Panc1 (cell line): ENCODE measurements at regions of chr3 and their contacts with region 1.

Region 1: GRCh38 chr3:57692259-57693147 is at the start of gene DENND6A:
- DNase-seq: no peak
- ATAC-seq: peak; percentile 97
- H3K4me3 ChIP-seq: peak within 1 kb of the TSS; percentile 76 to 91
- H3K27ac ChIP-seq: peak within 1 kb of the TSS; percentile 87
- H3K4me1 ChIP-seq: no peaks in the 10 kb centered on the region; the same call in 1 of the 2 replicates
- H3K27me3 ChIP-seq: no peaks in the 10 kb centered on the region
- CTCF ChIP-seq: no peak
- total RNA-seq, gene DENND6A: 18.1 TPM

Region 2: GRCh38 chr3:57755668-57756527 is 63.4 kb after region 1 on chr3 and contains the start of gene SLMAP:
- CTCF ChIA-PET with region 1: no interaction called
- POLR2A ChIA-PET with region 1: no interaction called
- in situ Hi-C with region 1: no loop called
- intact Hi-C with region 1: loop called (anchors 2 kb)
- DNase-seq: peak; percentile 85
- ATAC-seq: peak; percentile 95
- H3K4me3 ChIP-seq: peak within 1 kb of the TSS; percentile 73 to 77
- H3K27ac ChIP-seq: peak within 1 kb of the TSS; percentile 95
- H3K4me1 ChIP-seq: peaks cover 14% of the 10 kb centered on the region
- H3K27me3 ChIP-seq: no peaks in the 10 kb centered on the region
- CTCF ChIP-seq: no peak
- total RNA-seq, gene SLMAP: 49.2 TPM

Region 3: DNA sequence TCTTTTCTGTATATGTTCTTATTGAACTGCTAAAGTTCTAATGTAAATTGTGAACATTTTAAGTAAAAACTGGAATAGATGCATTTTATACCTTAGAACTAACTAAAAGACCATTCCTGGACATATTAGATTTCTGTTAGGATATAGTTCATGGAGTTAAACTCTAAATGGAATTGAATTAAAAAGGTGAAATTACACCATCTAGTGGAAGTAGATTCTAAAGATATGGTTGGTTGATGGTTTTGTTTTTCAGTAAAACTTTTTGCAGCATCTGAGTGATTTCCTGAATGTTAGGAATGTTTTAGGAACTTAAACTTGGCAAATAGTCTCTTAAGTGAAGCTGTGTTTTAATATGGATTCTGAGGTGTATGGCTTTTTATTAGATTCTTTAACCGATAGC is 160.4 kb after region 1 on chr3:
- CTCF ChIA-PET with region 1: interaction called, 10 read pairs
- POLR2A ChIA-PET with region 1: no interaction called
- in situ Hi-C with region 1: no loop called
- intact Hi-C with region 1: no loop called
- DNase-seq: no peak
- ATAC-seq: no peak
- H3K4me3 ChIP-seq: no peak overlapping the region
- H3K27ac ChIP-seq: no peak overlapping the region
- H3K4me1 ChIP-seq: no peaks in the 10 kb centered on the region
- H3K27me3 ChIP-seq: no peaks in the 10 kb centered on the region
- CTCF ChIP-seq: no peak; the same call in 1 of the 2 replicates